A549 (cell line): ENCODE measurements at regions of chr10 and their contacts with region 1.

Region 1: DNA sequence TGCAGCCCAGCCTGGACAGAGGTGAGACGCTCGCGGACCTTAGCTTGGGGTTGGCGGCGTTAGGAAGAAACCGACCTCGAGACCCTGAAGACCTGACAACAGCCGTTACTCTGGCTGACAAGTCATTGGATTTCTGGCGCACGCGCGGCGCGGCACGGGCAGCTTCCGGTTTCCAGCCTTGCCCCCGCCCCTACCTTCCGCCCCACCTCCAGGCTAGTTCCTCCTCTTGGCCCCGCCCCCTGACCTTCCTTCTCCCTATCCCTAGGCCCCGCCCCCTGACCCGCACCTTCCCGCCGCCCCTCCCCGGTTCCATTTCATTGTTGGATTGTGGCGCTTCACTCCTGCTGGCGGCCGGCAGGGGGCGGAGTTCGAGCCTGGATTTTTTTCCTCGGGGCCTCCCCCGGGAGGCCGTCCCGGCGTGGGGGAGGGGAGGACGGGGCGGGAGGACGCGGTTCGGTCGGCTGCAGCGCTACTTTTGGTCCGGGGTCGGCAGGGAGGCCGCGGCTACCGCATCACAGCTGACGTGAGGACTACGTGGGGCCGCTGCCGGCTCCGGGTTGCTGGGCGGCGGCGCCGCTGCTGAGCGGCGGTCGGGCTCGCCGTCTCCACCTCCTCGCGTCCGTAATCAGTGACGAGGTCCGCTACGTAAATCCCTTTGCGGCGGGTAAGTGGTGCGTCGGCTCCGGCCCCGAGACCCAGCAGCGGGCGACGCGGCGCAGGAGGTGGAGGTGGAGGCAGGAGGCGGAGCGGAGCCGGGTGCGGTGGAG is at the start of gene CREM:
- DNase-seq: peak; percentile 85 to 98
- ATAC-seq: peak; percentile 92 to 94
- H3K4me3 ChIP-seq: peak within 1 kb of the TSS; percentile 87
- H3K27ac ChIP-seq: peak within 1 kb of the TSS; percentile 96 to 97
- H3K4me1 ChIP-seq: peaks cover 28% of the 10 kb centered on the region; the same call in 2 of the 3 replicates
- CTCF ChIP-seq: peak; percentile 77
- EP300 ChIP-seq: peak in 1 of 2 experiments; percentile 61; a peak in 1 of 5 replicates
- POLR2A ChIP-seq: peak; percentile 97
- RAD21 ChIP-seq: peak; percentile 58 to 81
- polyA plus RNA-seq, gene CREM: 94.5 and 112 TPM in 2 replicates

Region 2: DNA sequence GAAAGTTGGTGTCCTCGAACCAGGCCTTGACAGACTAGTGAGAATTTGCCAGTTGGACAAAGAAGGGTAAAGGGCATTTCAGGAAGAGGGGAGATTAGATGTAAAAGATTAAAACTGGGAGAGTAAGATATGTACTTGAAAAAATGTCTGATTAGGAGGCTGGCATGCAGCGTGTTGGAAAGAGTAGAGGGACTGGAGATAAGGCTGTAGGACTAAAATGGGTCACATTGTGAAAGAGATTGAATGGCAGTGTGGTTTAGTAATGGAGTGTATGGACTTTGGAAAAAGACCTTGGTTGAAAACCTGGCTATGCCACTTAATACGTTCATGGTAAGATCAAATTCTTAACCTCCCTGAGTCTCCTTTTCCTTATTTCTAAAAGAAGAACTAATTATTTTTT is 14.0 kb after region 1 on chr10:
- CTCF ChIA-PET with region 1: interaction called, 11 read pairs
- POLR2A ChIA-PET with region 1: interaction called, 4 read pairs
- DNase-seq: no peak
- ATAC-seq: no peak
- H3K4me3 ChIP-seq: no peak overlapping the region
- H3K27ac ChIP-seq: no peak overlapping the region
- H3K4me1 ChIP-seq: no peaks in the 10 kb centered on the region
- CTCF ChIP-seq: no peak
- EP300 ChIP-seq: no peak
- POLR2A ChIP-seq: no peak
- RAD21 ChIP-seq: no peak

Region 3: GRCh38 chr10:35218339-35218955 is 91.7 kb after region 1 on chr10:
- CTCF ChIA-PET with region 1: interaction called, 246 read pairs
- POLR2A ChIA-PET with region 1: interaction called, 14 read pairs
- DNase-seq: peak; percentile 66 to 92
- ATAC-seq: peak; percentile 80 to 87
- H3K4me3 ChIP-seq: no peak overlapping the region
- H3K27ac ChIP-seq: peak overlapping the region in 1 of 2 experiments; percentile 30; a peak in 2 of 6 replicates
- H3K4me1 ChIP-seq: peaks cover 14% of the 10 kb centered on the region; the same call in 2 of the 3 replicates
- CTCF ChIP-seq: peak; percentile 95
- EP300 ChIP-seq: no peak
- POLR2A ChIP-seq: no peak
- RAD21 ChIP-seq: peak; percentile 81 to 83

Region 4: DNA sequence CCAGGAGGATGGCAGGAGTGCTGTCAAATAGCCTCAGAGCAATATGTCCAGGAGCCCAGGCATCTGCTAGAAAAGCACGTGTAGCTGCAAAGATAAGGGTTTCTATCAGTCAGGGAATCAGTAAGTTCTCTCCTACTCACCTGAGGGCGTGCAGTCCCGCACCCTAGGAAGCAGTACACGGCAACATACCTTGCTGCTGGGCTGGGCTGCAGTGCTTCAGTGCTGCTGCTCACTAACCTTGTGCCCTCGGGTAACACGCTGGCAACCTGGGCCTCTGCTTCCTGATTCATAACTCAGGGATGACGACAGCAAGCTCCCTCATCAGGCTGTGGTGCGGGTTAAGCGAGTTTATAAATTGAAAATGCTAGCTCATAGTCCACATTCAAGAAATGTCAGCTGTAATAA is 180.1 kb after region 1 on chr10:
- CTCF ChIA-PET with region 1: no interaction called
- POLR2A ChIA-PET with region 1: no interaction called
- DNase-seq: peak in 1 of 2 experiments; percentile 57
- ATAC-seq: peak; percentile 72 to 78
- H3K4me3 ChIP-seq: no peak overlapping the region
- H3K27ac ChIP-seq: peak overlapping the region; percentile 12 to 35; a peak in 4 of 6 replicates
- H3K4me1 ChIP-seq: peaks cover 11% of the 10 kb centered on the region
- CTCF ChIP-seq: no peak
- EP300 ChIP-seq: no peak
- POLR2A ChIP-seq: no peak
- RAD21 ChIP-seq: no peak